ENCODE measurements at regions of chr10 and their contacts with region 1.

Region 1: GRCh38 chr10:27513451-27514191 is 9.5 kb downstream of the RAB18 start:
- DNase-seq: peak; percentile 57
- ATAC-seq: peak; percentile 63
- H3K4me3 ChIP-seq: no peak overlapping the region
- H3K27ac ChIP-seq: no peak overlapping the region
- H3K4me1 ChIP-seq: peaks cover 5% of the 10 kb centered on the region
- H3K27me3 ChIP-seq: no peaks in the 10 kb centered on the region
- CTCF ChIP-seq: no peak
- POLR2A ChIP-seq: no peak
- RAD21 ChIP-seq: no peak

Region 2: DNA sequence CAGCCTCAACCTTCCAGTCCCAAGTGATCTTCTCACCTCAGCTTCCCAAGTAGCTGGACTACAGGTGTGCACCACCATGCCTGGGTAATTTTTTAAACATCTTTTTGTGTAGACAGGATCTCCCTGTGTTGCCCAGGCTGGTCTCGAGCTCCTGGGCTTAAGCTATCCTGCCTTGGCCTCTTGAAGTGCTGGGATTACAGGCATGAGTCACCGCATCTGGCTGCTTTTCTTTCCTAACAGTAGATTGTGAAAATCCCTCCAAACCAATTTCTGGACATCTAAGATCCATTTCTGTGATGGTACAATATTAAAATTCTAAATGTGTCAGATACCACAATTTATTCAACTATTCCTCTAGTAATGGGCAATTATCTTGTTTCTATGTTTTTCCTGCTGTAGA is 29.2 kb after region 1 on chr10:
- CTCF ChIA-PET with region 1: no interaction called
- POLR2A ChIA-PET with region 1: no interaction called
- dilution Hi-C with region 1: no loop called
- in situ Hi-C with region 1: no loop called
- intact Hi-C with region 1: loop called (anchors 2 kb)
- DNase-seq: peak; percentile 68
- ATAC-seq: peak; percentile 87
- H3K4me3 ChIP-seq: no peak overlapping the region
- H3K27ac ChIP-seq: no peak overlapping the region
- H3K4me1 ChIP-seq: peaks cover 2% of the 10 kb centered on the region
- H3K27me3 ChIP-seq: no peaks in the 10 kb centered on the region
- CTCF ChIP-seq: no peak
- POLR2A ChIP-seq: no peak
- RAD21 ChIP-seq: no peak

Measured in IMR-90 (cell line).